Endothelial cell of umbilical vein (primary cell): ENCODE measurements at regions of chr12 and their contacts with region 1.

Region 1: GRCh38 chr12:121170611-121171260 is 38.1 kb downstream of the P2RX7 start:
- DNase-seq: peak; percentile 28
- H3K4me3 ChIP-seq: no peak overlapping the region
- H3K27ac ChIP-seq: peak overlapping the region; percentile 64
- H3K4me1 ChIP-seq: peaks cover 11% of the 10 kb centered on the region
- H3K27me3 ChIP-seq: no peaks in the 10 kb centered on the region
- CTCF ChIP-seq: no peak
- POLR2A ChIP-seq: no peak

Region 2: GRCh38 chr12:121209624-121210572 is 39.2 kb after region 1 on chr12 and contains the start of gene P2RX4:
- CTCF ChIA-PET with region 1: interaction called, 4 read pairs
- POLR2A ChIA-PET with region 1: no interaction called
- dilution Hi-C with region 1: no loop called
- intact Hi-C with region 1: loop called (anchors 1 kb)
- DNase-seq: peak; percentile 76
- H3K4me3 ChIP-seq: peak within 1 kb of the TSS; percentile 35 to 75 (median 52)
- H3K27ac ChIP-seq: peak within 1 kb of the TSS; percentile 59
- H3K4me1 ChIP-seq: peaks cover 23% of the 10 kb centered on the region
- H3K27me3 ChIP-seq: no peaks in the 10 kb centered on the region
- CTCF ChIP-seq: peak; percentile 16 to 23
- POLR2A ChIP-seq: peak; percentile 78
- total RNA-seq, gene P2RX4: 72.8 and 116 TPM in 2 replicates

Region 3: DNA sequence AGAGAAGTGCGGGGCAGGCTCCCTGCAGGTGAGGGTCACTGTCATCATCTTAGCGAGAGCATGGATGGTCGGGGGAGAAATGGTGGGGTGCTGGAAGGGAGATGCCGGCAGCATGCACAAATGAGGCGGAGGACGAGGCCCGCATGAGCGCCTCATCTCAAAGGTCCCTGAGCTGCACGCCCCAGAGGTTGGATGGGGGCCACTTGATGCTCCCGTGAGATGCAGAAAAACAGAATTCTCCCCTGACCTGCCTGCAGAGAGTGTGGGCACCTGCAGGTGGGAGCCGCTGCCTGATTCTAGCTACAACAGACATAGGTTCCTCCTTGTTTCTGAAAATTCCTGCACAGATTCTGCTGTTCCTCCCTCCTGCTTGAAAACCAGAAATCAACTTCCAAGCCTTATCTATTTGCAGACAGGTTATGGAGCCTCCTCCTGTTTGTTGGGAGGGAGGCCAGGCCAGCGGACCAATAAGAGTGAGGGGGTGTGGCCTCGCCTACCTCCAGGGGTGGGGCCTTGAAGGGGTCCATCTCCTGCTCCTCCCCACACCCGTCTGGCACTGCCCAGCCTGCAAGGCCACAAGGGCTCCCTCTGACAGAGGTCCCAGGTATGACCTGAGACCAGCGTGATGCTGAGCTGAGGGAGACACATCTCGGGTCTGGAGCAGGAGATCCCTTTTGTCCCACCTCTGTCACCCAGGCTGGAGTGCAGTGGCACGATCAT is 342.9 kb after region 1 on chr12:
- CTCF ChIA-PET with region 1: no interaction called
- POLR2A ChIA-PET with region 1: no interaction called
- dilution Hi-C with region 1: no loop called
- intact Hi-C with region 1: no loop called
- DNase-seq: no peak
- H3K4me3 ChIP-seq: no peak overlapping the region
- H3K27ac ChIP-seq: no peak overlapping the region
- H3K4me1 ChIP-seq: no peaks in the 10 kb centered on the region
- H3K27me3 ChIP-seq: no peaks in the 10 kb centered on the region
- CTCF ChIP-seq: no peak
- POLR2A ChIP-seq: no peak